HAP-1 (cell line): ENCODE measurements at regions of chr2 and their contacts with region 1.

Region 1: DNA sequence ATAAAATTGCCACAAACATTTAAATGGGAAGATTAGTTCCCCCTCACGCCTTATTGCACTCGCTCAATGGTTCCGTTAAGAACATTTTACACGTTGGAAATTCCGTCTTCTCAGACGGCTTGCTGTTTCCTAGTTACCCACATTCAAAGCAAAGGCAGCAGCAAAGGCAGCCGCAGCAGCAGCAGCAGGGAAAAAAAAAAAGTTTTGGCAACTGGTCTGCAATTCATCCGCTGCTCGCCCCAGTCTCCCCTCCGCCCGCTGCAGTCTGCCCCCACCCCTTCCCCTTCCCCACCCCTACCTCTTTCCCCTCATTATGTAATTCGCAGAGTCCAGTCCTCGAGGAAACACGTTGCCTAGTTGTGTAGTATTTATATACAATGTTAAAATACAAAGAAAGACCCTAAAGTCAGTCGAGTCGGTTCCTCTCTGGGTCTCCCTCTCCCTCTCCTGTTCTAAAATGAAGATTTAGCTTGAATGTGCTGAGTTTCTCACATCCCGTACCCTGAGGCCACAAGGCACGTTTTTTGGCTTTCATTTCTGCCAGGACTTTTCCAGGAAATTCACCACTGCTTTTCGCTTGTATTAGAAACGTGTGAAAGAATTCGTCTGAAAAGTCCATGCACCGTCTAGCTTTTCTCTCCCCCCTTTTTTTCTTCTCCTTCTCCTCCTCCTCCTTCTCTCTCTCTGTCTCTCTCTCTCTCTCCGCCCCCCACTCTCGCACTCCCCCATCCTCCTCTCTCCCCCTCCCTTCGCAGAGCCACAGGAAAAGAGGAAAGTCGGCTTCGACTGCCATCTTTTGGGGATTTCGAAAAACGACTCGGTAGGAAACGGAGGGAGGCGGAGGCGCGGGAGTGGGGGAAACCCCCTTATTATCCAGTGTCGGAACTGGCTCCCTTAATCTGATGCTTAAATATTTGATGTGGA is 140.0 kb downstream of the MEIS1 start:
- DNase-seq: peak; percentile 74 to 84
- H3K4me3 ChIP-seq: peak overlapping the region; percentile 27
- H3K4me1 ChIP-seq: peaks cover 11% of the 10 kb centered on the region
- H3K27me3 ChIP-seq: peaks cover 27% of the 10 kb centered on the region

Region 2: DNA sequence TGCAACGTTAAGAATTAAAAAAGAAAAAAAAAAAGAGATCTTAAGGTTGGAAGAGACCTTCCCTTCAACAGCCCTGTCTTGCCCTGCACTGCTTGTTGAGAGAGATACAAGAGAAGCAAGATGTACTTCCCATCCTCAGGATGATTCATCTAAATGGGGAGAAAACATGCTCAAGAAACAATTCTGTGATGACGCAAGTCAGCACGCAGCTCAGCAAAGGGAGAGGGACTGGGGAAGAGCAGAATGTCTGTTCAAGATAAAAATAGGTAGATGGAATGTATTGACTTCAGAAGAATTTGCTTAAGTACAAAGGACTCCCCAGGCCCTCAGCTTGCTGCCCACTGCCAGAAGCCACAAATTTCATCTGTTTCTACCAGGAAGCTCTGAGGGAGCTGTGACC is 944.3 kb before region 1 on chr2:
- in situ Hi-C with region 1: loop called (anchors 25 kb)
- DNase-seq: no peak
- H3K4me3 ChIP-seq: no peak overlapping the region
- H3K4me1 ChIP-seq: peaks cover 9% of the 10 kb centered on the region
- H3K27me3 ChIP-seq: no peaks in the 10 kb centered on the region

Region 3: DNA sequence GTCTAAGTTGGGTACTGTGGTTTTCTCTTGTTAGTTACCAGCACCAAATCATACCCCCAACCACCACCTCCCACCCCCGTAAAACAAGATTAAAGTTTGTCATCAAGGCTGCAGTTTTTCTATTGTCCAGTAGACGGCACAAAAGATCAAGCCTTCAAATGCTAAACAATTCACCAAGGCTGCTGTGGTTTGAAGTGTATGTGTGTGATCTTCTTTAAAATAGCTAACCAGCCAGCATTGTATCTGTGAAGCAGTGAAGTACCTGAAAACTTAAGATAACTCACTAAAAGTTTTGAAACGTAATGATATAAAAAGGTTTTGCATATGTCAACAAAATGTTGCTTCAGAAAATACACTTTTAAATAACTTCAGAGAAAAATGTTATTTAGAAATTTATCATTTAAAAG is 145.9 kb before region 1 on chr2:
- in situ Hi-C with region 1: loop called (anchors 5 kb)
- DNase-seq: peak; percentile 49 to 70
- H3K4me3 ChIP-seq: no peak overlapping the region
- H3K4me1 ChIP-seq: no peaks in the 10 kb centered on the region
- H3K27me3 ChIP-seq: peaks cover 48% of the 10 kb centered on the region